Activated naive CD4-positive, alpha-beta T cell treated with anti-CD3 and anti-CD28 coated beads for 36 hours (primary cell): ENCODE measurements at regions of chr11 and their contacts with region 1.

Region 1: GRCh38 chr11:14075118-14076078 is 112.9 kb downstream of the SPON1 start:
- DNase-seq: peak; percentile 86
- H3K4me3 Mint-ChIP-seq: peak overlapping the region; percentile 13
- H3K27ac Mint-ChIP-seq: peak overlapping the region; percentile 62
- H3K4me1 Mint-ChIP-seq: peaks cover 55% of the 10 kb centered on the region
- H3K27me3 Mint-ChIP-seq: no peaks in the 10 kb centered on the region

Region 2: DNA sequence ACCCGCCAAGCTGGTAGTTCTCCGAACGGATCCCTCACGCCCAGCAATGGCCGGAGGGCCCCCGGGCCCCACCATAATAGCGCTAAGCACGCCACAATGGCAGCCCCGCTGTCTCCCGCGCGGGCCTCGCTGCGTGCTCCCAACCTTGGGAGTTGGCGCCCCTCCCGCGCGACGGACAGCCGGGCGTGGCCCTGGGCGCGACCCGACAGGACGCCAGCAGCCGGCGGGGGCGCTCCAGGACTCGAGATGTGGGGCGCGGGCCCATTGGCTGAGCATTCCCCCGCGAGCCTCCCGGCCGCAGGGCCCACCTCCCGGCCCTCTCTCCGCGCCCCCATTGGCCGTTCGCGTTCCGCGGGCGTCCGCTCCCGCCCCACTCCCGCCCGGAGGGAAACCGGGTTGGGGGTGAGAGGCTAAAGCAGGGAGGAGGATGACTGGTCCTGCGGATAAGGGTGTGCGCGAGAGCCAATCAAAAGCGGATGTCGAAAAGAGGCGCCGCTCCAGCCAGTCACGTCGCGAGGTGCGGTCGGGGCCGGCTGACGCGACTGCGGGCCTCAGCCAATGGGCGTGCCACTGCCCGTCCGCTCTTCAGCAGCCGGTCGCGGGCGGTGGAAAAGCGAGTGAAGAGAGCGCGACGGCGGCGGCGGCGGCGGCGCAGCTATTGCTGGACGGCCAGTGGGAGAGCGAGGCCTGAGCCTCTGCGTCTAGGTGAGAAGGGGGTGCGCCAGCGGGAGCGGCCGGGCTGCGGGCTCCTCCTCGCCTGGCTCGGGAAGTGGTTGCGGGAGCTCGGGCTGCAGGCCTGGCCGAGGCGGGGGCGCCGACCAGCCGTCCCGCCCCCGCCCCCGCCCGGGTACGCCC is 407.1 kb before region 1 on chr11 and contains the start of gene FAR1:
- CTCF ChIA-PET with region 1: no interaction called
- intact Hi-C with region 1: loop called (anchors 5 kb)
- DNase-seq: peak; percentile 98
- H3K4me3 Mint-ChIP-seq: peak within 1 kb of the TSS; percentile 95
- H3K27ac Mint-ChIP-seq: peak within 1 kb of the TSS; percentile 92
- H3K4me1 Mint-ChIP-seq: peaks cover 40% of the 10 kb centered on the region
- H3K27me3 Mint-ChIP-seq: peaks cover 7% of the 10 kb centered on the region
- total RNA-seq, gene FAR1: 37.2 to 42.3 TPM

Region 3: GRCh38 chr11:13970986-13971385 is 104.4 kb before region 1 on chr11:
- CTCF ChIA-PET with region 1: no interaction called
- intact Hi-C with region 1: loop called (anchors 2 kb)
- DNase-seq: peak; percentile 53
- H3K4me3 Mint-ChIP-seq: no peak overlapping the region
- H3K27ac Mint-ChIP-seq: no peak overlapping the region
- H3K4me1 Mint-ChIP-seq: peaks cover 16% of the 10 kb centered on the region
- H3K27me3 Mint-ChIP-seq: peaks cover 6% of the 10 kb centered on the region

Region 4: DNA sequence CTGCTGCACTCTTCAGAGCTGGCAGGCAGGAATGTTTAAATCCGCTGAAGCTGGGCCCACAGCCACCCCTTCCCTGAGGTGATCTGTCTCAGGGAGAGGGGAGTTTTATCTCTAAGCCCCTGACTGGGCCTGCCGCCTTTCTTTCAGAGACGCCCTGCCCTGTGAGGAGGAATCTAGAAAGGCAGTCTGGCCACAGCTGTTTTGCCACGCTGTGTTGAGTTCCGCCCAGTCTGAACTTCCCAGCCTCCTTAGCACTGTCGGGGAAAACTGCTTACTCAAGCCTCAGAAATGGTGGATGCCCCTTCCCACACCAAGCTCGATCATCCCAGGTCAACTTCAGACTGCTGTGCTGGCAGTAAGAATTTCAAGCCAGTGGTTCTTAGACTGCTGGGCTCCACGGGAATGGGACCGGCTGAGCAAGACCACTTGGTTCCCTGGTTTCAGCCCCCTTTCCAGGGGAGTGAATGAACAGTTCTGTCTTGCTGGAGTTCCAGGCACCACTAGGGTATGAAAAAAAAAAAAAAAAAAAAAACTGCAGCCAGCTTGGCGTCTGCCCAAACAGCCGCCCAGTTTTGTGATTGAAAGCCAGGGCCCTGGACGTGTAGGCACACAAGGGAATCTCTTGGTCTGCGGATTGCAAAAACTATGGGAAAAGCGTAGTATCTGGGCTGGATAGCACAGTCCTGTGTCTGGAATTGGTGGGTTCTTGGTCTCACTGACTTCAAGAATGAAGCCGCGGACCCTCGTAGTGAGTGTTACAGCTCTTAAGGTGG is 14.5 kb after region 1 on chr11:
- CTCF ChIA-PET with region 1: no interaction called
- intact Hi-C with region 1: loop called (anchors 1 kb)
- DNase-seq: no peak
- H3K4me3 Mint-ChIP-seq: no peak overlapping the region
- H3K27ac Mint-ChIP-seq: no peak overlapping the region
- H3K4me1 Mint-ChIP-seq: peaks cover 26% of the 10 kb centered on the region
- H3K27me3 Mint-ChIP-seq: no peaks in the 10 kb centered on the region

Region 5: GRCh38 chr11:14119357-14119756 is 44.0 kb after region 1 on chr11:
- CTCF ChIA-PET with region 1: no interaction called
- intact Hi-C with region 1: loop called (anchors 1 kb)
- DNase-seq: peak; percentile 67
- H3K4me3 Mint-ChIP-seq: no peak overlapping the region
- H3K27ac Mint-ChIP-seq: no peak overlapping the region
- H3K4me1 Mint-ChIP-seq: peaks cover 19% of the 10 kb centered on the region
- H3K27me3 Mint-ChIP-seq: no peaks in the 10 kb centered on the region

Region 6: GRCh38 chr11:14443638-14444037 is 368.2 kb after region 1 on chr11:
- CTCF ChIA-PET with region 1: no interaction called
- intact Hi-C with region 1: loop called (anchors 10 kb)
- DNase-seq: no peak
- H3K4me3 Mint-ChIP-seq: no peak overlapping the region
- H3K27ac Mint-ChIP-seq: no peak overlapping the region
- H3K4me1 Mint-ChIP-seq: peaks cover 46% of the 10 kb centered on the region
- H3K27me3 Mint-ChIP-seq: no peaks in the 10 kb centered on the region